HCT116 (cell line): ENCODE measurements at regions of chr5 and their contacts with region 1.

Region 1: GRCh38 chr5:179806250-179807222 is at the start of gene MGAT4B:
- DNase-seq: no peak
- ATAC-seq: peak; percentile 65
- H3K4me3 ChIP-seq: peak within 1 kb of the TSS; percentile 71 to 92
- H3K27ac ChIP-seq: peak within 1 kb of the TSS; percentile 99
- H3K4me1 ChIP-seq: peaks cover 38 to 58% of the 10 kb centered on the region in 2 experiments
- H3K27me3 ChIP-seq: no peaks in the 10 kb centered on the region
- CTCF ChIP-seq: no peak
- POLR2A ChIP-seq: peak; percentile 68
- RAD21 ChIP-seq: no peak
- total RNA-seq, gene MGAT4B: 148 TPM

Region 2: GRCh38 chr5:179393078-179393477 is 413.5 kb before region 1 on chr5:
- CTCF ChIA-PET with region 1: no interaction called
- POLR2A ChIA-PET with region 1: no interaction called
- RAD21 ChIA-PET with region 1: no interaction called
- intact Hi-C with region 1: no loop called
- DNase-seq: peak; percentile 65
- ATAC-seq: peak; percentile 73
- H3K4me3 ChIP-seq: no peak overlapping the region
- H3K27ac ChIP-seq: no peak overlapping the region
- H3K4me1 ChIP-seq: peaks cover 0 to 17% of the 10 kb centered on the region in 2 experiments; a peak in 2 of 4 replicates
- H3K27me3 ChIP-seq: no peaks in the 10 kb centered on the region
- CTCF ChIP-seq: no peak
- POLR2A ChIP-seq: no peak
- RAD21 ChIP-seq: 0 out of 2 replicates have a peak, but pooled peaks have one; percentile 1

Region 3: DNA sequence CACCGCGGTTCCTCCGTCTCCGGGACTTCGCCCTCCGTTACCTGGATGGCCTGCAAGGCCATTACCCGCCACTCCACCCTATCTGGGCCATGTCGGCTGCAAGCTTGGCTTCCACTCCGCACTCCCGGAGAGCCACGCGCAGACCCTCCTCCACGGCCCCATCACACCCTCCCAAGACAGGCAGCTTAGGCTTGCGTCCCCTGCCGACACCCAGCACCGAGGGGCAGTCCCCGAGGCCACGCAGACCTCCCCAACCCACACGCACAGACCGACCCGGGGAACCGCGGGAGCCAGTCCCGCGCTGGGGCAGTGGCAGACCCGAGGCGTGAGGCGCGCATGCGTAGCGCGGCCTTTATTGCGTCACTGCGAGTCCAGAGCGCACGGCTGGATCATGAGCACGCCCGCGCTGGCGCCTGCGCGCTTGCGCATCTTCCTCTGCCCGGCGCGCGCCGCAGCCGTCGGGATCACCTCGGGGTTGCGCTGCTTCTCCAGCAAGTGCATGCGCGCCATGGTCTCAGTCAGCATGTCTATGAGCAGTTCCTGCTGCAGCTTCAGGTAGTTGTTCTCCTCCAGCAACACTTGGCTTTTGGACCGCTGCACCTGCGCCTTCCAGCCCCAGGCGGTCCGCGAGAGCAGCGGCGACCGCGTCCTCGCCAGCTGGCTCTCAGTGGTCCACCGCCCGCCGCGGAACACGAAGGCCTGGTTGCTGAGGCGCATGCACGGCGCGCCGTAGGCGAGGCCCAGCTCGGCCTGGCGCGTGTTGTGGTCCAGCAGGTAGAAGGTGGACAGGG is 128.1 kb before region 1 on chr5:
- CTCF ChIA-PET with region 1: no interaction called
- POLR2A ChIA-PET with region 1: no interaction called
- RAD21 ChIA-PET with region 1: no interaction called
- intact Hi-C with region 1: no loop called
- DNase-seq: peak; percentile 88
- ATAC-seq: peak; percentile 92
- H3K4me3 ChIP-seq: peak overlapping the region; percentile 92 to 98
- H3K27ac ChIP-seq: peak overlapping the region; percentile 83
- H3K4me1 ChIP-seq: peaks cover 12 to 18% of the 10 kb centered on the region in 2 experiments
- H3K27me3 ChIP-seq: no peaks in the 10 kb centered on the region
- CTCF ChIP-seq: no peak
- POLR2A ChIP-seq: peak; percentile 97
- RAD21 ChIP-seq: no peak

Region 4: GRCh38 chr5:179821581-179822432 is 15.3 kb after region 1 on chr5:
- CTCF ChIA-PET with region 1: interaction called, 8 read pairs
- POLR2A ChIA-PET with region 1: interaction called, 18 read pairs
- RAD21 ChIA-PET with region 1: interaction called in 1 of 2 experiments, 3 read pairs
- intact Hi-C with region 1: loop called (anchors 1 kb)
- DNase-seq: peak; percentile 81
- ATAC-seq: peak; percentile 71
- H3K4me3 ChIP-seq: peak overlapping the region; percentile 76 to 87
- H3K27ac ChIP-seq: peak overlapping the region; percentile 99
- H3K4me1 ChIP-seq: peaks cover 35 to 57% of the 10 kb centered on the region in 2 experiments
- H3K27me3 ChIP-seq: no peaks in the 10 kb centered on the region
- CTCF ChIP-seq: no peak
- POLR2A ChIP-seq: peak; percentile 65
- RAD21 ChIP-seq: no peak

Region 5: GRCh38 chr5:179907570-179908324 is 101.2 kb after region 1 on chr5 and contains the start of gene TBC1D9B:
- CTCF ChIA-PET with region 1: interaction called, 5 read pairs
- POLR2A ChIA-PET with region 1: no interaction called
- RAD21 ChIA-PET with region 1: no interaction called
- intact Hi-C with region 1: loop called (anchors 5 kb)
- DNase-seq: no peak
- ATAC-seq: peak; percentile 91
- H3K4me3 ChIP-seq: peak within 1 kb of the TSS; percentile 70 to 90
- H3K27ac ChIP-seq: peak within 1 kb of the TSS; percentile 77
- H3K4me1 ChIP-seq: peaks cover 6 to 18% of the 10 kb centered on the region in 2 experiments; a peak in 3 of 4 replicates
- H3K27me3 ChIP-seq: no peaks in the 10 kb centered on the region
- CTCF ChIP-seq: peak in 1 of 3 experiments; percentile 7; a peak in 1 of 6 replicates
- POLR2A ChIP-seq: peak; percentile 81
- RAD21 ChIP-seq: no peak
- total RNA-seq, gene TBC1D9B: 127 TPM

Region 6: GRCh38 chr5:180090098-180090768 is 283.7 kb after region 1 on chr5:
- CTCF ChIA-PET with region 1: interaction called, 3 read pairs
- POLR2A ChIA-PET with region 1: no interaction called
- RAD21 ChIA-PET with region 1: no interaction called
- intact Hi-C with region 1: loop called (anchors 5 kb)
- DNase-seq: peak; percentile 56
- ATAC-seq: peak; percentile 86
- H3K4me3 ChIP-seq: peak overlapping the region; percentile 40 to 59
- H3K27ac ChIP-seq: no peak overlapping the region; the same call in 1 of the 2 replicates
- H3K4me1 ChIP-seq: peaks cover 8 to 17% of the 10 kb centered on the region in 2 experiments; a peak in 3 of 4 replicates
- H3K27me3 ChIP-seq: no peaks in the 10 kb centered on the region
- CTCF ChIP-seq: peak; percentile 69 to 87 (median 72)
- POLR2A ChIP-seq: no peak
- RAD21 ChIP-seq: peak; percentile 71